ENCODE measurements at regions of chr2 and their contacts with region 1.

Region 1: DNA sequence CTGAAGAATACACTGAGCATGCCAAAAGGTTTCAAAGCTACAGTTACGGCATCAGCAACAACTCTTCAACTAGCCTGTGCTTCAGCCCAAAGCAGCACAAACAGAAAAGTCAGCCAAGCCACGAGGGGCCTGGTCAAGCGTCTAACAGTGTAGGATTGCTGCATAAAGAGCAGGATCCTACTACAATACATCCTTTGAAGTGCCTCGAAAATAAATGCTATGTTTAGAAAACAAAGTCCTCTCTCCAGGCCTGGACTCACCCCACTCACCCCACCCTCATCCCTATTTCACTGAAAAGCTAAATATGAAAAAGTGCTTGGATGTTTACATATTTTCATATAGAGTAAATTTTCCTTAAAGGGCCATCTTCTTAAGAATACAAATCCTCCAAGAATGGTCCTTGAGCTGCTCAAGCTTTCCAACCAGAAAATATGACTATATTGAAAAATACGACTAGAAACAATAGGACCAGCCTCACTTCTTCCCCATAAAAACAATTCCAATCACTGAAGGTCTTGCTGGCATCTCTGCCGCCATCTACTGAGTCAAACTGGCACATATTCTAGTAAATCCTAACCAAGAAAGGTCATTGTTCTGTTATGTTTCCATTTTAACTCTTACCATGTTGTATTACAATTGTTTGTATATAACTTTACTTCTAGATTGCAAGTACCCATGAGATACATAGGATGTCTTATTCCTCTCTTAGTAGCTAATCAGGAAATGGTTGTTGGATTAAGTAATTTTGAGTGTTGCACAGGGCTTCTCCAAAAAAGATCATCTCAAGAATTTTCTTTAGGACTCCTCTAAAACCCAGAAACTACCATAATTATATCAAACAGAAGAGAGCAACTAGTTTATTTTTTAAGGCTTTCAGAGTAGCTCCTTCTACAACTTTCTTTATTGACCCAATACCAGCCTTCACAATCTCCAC is 63.6 kb downstream of the CLHC1 start:
- DNase-seq: peak; percentile 66 to 90
- H3K4me3 ChIP-seq: no peak overlapping the region
- CTCF ChIP-seq: peak in 1 of 3 donors; percentile 23
- POLR2A ChIP-seq: no peak

Region 2: GRCh38 chr2:55010149-55010591 is 158.3 kb before region 1 on chr2:
- intact Hi-C with region 1: loop called (anchors 10 kb)
- DNase-seq: peak; percentile 79 to 88
- H3K4me3 ChIP-seq: no peak overlapping the region
- CTCF ChIP-seq: no peak
- POLR2A ChIP-seq: no peak

Region 3: DNA sequence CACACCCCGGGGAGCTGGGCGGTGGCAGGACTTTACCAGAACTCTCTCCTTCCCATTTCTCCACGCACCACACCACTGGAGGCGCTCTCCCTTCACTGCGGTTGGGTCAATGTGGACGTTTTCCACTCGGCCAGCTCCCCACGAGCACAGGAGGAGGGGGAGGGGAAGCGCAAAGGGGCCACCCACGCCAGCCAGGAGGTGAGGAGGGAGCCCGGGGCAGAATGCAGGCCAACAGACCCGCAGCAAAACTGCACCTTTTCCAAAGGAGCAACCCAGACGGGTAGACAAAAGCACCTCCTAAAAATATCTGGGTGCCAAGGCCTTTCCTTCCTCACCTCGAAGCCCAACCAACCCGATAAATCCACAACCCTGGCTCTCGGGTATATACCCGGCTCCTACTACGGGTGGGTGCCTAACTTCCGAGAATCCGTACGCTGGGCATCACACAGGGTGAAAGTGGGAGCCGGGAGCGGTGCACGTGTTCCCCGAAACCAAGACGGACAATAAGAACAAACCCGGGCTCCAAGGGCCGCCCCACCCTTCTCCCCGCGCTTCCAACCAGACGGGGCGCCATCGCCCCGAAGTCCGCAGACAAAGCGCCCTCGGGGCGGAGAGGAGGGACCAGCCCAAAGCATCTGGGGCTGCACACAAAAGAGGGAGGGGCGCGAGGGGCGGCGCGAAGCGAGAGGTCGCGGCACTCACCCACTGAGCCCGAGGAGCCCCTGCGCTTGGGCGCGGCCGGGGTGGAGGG is 119.3 kb before region 1 on chr2:
- intact Hi-C with region 1: loop called (anchors 10 kb)
- DNase-seq: peak; percentile 92 to 98
- H3K4me3 ChIP-seq: peak overlapping the region; percentile 82
- CTCF ChIP-seq: peak in 1 of 3 donors; percentile 76
- POLR2A ChIP-seq: peak in 1 of 2 donors; percentile 3

Region 4: GRCh38 chr2:56099963-56100362 is 931.5 kb after region 1 on chr2:
- intact Hi-C with region 1: no loop called
- DNase-seq: no peak
- H3K4me3 ChIP-seq: no peak overlapping the region
- CTCF ChIP-seq: no peak
- POLR2A ChIP-seq: no peak

Measured in lower leg skin (tissue), 4 donors.